Psoas muscle (tissue), 8 donors: ENCODE measurements at regions of chr9 and their contacts with region 1.

Region 1: GRCh38 chr9:130701056-130702022 is 7.8 kb downstream of the EXOSC2 start:
- DNase-seq: peak; percentile 75 to 83
- ATAC-seq: peak; percentile 76 to 91 (median 85)
- H3K4me3 ChIP-seq: no peak overlapping the region
- H3K27ac ChIP-seq: no peak overlapping the region
- H3K4me1 ChIP-seq: no peaks in the 10 kb centered on the region
- H3K27me3 ChIP-seq: no peaks in the 10 kb centered on the region
- CTCF ChIP-seq: peak; percentile 87

Region 2: GRCh38 chr9:130090915-130091314 is 610.4 kb before region 1 on chr9:
- intact Hi-C with region 1: no loop called
- DNase-seq: no peak
- ATAC-seq: no peak
- H3K4me3 ChIP-seq: no peak overlapping the region
- H3K27ac ChIP-seq: no peak overlapping the region
- H3K4me1 ChIP-seq: no peaks in the 10 kb centered on the region
- H3K27me3 ChIP-seq: no peaks in the 10 kb centered on the region
- CTCF ChIP-seq: no peak

Region 3: GRCh38 chr9:130768265-130768664 is 66.9 kb after region 1 on chr9:
- intact Hi-C with region 1: no loop called
- DNase-seq: no peak
- ATAC-seq: no peak
- H3K4me3 ChIP-seq: no peak overlapping the region
- H3K27ac ChIP-seq: no peak overlapping the region
- H3K4me1 ChIP-seq: peaks cover 28% of the 10 kb centered on the region
- H3K27me3 ChIP-seq: no peaks in the 10 kb centered on the region
- CTCF ChIP-seq: no peak

Region 4: DNA sequence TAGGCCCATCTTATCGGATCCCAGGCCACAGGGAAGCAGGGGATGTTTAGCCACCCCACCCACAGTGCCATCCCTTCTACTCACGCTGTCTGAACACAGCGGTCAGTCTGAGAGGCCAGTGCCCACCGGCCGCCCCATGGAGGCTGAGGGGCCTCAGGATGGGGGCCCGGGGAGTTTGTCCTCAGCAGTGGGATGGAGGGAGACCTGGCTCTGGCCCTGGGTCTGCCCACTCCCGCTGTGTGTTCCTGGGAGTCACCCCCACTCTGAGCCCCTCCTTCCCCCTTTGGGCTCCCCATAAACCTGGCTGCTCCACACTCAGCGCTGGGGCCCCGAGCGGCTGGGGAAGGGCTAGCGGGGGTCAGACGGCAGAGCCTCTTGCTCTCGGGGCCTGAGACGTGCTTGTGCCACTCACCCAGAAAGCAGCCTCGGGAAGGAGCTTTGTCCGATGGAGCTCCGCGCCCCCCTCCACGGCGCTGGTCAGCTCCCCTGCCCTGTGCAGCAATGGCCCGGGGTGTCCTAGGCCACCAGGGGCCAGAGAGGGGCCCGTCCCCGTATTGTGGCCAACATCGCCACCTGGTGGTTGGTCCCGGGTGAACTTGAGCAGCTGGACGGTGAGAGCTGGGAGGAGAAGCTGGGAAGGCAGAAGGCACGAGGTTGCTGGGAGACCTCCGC is 296.7 kb after region 1 on chr9:
- intact Hi-C with region 1: loop called in 1 of 2 experiments (anchors 5 kb)
- DNase-seq: peak; percentile 68 to 81
- ATAC-seq: peak; percentile 65 to 83 (median 78)
- H3K4me3 ChIP-seq: no peak overlapping the region
- H3K27ac ChIP-seq: no peak overlapping the region
- H3K4me1 ChIP-seq: no peaks in the 10 kb centered on the region
- H3K27me3 ChIP-seq: peaks cover 0 to 61% (median 19%) of the 10 kb centered on the region in 3 donors
- CTCF ChIP-seq: peak; percentile 51

Region 5: GRCh38 chr9:131046581-131047202 is 345.4 kb after region 1 on chr9:
- intact Hi-C with region 1: loop called (anchors 2 to 10 kb)
- DNase-seq: peak; percentile 67 to 78
- ATAC-seq: peak; percentile 79 to 89 (median 84)
- H3K4me3 ChIP-seq: no peak overlapping the region
- H3K27ac ChIP-seq: no peak overlapping the region
- H3K4me1 ChIP-seq: no peaks in the 10 kb centered on the region
- H3K27me3 ChIP-seq: peaks cover 0 to 4% (median 0%) of the 10 kb centered on the region in 3 donors
- CTCF ChIP-seq: peak; percentile 90